Calu3 (cell line): ENCODE measurements at regions of chr6 and their contacts with region 1.

Region 1: DNA sequence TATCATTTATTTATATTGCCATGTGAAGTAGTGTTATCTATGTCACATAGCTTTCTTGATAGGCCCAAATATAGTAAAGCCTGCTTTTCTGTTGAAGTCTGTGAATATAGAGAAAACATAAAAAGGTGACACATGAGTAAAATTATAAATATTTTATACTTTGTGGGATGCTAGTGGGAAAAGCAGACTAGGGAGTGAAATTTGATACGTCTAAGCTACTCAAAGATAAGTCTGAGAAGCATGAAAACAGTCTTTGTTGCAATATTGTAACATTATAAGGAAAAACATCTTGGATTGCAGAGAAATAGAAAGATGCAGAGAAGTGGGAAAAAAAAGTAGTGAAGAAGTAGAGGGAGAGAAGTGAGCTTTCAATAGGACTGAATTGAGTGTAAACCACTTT is 75.4 kb downstream of the ZNF292 start:
- DNase-seq: no peak
- H3K4me3 Mint-ChIP-seq: no peak overlapping the region
- H3K27ac Mint-ChIP-seq: no peak overlapping the region
- H3K4me1 Mint-ChIP-seq: no peaks in the 10 kb centered on the region
- H3K27me3 Mint-ChIP-seq: no peaks in the 10 kb centered on the region
- CTCF ChIP-seq: no peak

Region 2: DNA sequence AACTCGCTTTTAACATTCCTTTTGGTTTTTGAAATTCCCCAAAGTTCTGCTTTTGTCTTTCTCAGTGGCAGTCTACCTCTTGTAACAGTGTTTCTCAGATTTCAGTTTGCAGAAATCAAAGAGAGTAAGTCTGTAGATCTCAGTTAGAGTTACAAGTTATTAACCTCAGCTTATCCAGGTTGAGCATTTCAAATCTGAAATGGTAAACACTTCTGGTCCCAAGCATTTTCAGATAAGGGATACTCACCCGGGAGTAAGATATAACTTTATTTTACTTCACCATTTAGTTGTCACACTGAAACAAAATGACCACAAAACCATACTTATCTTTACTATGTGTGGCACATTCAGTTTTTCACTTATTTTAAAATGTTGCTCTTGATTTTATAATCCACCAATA is 65.6 kb before region 1 on chr6:
- CTCF ChIA-PET with region 1: no interaction called
- intact Hi-C with region 1: loop called (anchors 5 kb)
- DNase-seq: no peak
- H3K4me3 Mint-ChIP-seq: no peak overlapping the region
- H3K27ac Mint-ChIP-seq: no peak overlapping the region
- H3K4me1 Mint-ChIP-seq: peaks cover 35% of the 10 kb centered on the region
- H3K27me3 Mint-ChIP-seq: no peaks in the 10 kb centered on the region
- CTCF ChIP-seq: no peak

Region 3: GRCh38 chr6:87589693-87590549 is 359.1 kb after region 1 on chr6 and contains the starts of genes ORC3 and RARS2:
- CTCF ChIA-PET with region 1: no interaction called
- intact Hi-C with region 1: no loop called
- DNase-seq: peak; percentile 97
- H3K4me3 Mint-ChIP-seq: peak within 1 kb of the TSS; percentile 88
- H3K27ac Mint-ChIP-seq: peak within 1 kb of the TSS; percentile 77
- H3K4me1 Mint-ChIP-seq: peaks cover 23% of the 10 kb centered on the region
- H3K27me3 Mint-ChIP-seq: no peaks in the 10 kb centered on the region
- CTCF ChIP-seq: no peak
- total RNA-seq, gene ORC3: 32.7 and 35.1 TPM in 2 replicates
- total RNA-seq, gene RARS2: 24.4 and 24.7 TPM in 2 replicates